Mammary epithelial cell (primary cell): ENCODE measurements at regions of chr3 and their contacts with region 1.

Region 1: GRCh38 chr3:46442576-46443562 is 21.8 kb downstream of the LTF start:
- DNase-seq: no peak
- H3K4me3 ChIP-seq: no peak overlapping the region
- H3K27ac ChIP-seq: no peak overlapping the region
- H3K4me1 ChIP-seq: no peaks in the 10 kb centered on the region
- H3K27me3 ChIP-seq: no peaks in the 10 kb centered on the region
- CTCF ChIP-seq: no peak

Region 2: GRCh38 chr3:45938864-45939263 is 504.0 kb before region 1 on chr3:
- CTCF ChIA-PET with region 1: no interaction called
- dilution Hi-C with region 1: no loop called
- in situ Hi-C with region 1: no loop called
- intact Hi-C with region 1: loop called (anchors 5 kb)
- DNase-seq: peak; percentile 74
- H3K4me3 ChIP-seq: no peak overlapping the region
- H3K27ac ChIP-seq: no peak overlapping the region
- H3K4me1 ChIP-seq: no peaks in the 10 kb centered on the region
- H3K27me3 ChIP-seq: no peaks in the 10 kb centered on the region
- CTCF ChIP-seq: peak; percentile 93 to 95

Region 3: GRCh38 chr3:46214751-46215352 is 228.0 kb before region 1 on chr3:
- CTCF ChIA-PET with region 1: no interaction called
- dilution Hi-C with region 1: no loop called
- in situ Hi-C with region 1: no loop called
- intact Hi-C with region 1: loop called (anchors 1 kb)
- DNase-seq: no peak
- H3K4me3 ChIP-seq: no peak overlapping the region
- H3K27ac ChIP-seq: no peak overlapping the region
- H3K4me1 ChIP-seq: peaks cover 2% of the 10 kb centered on the region
- H3K27me3 ChIP-seq: no peaks in the 10 kb centered on the region
- CTCF ChIP-seq: peak; percentile 37 to 57

Region 4: GRCh38 chr3:46276502-46277099 is 166.3 kb before region 1 on chr3:
- CTCF ChIA-PET with region 1: no interaction called
- dilution Hi-C with region 1: no loop called
- in situ Hi-C with region 1: no loop called
- intact Hi-C with region 1: loop called (anchors 1 kb)
- DNase-seq: peak; percentile 54
- H3K4me3 ChIP-seq: no peak overlapping the region
- H3K27ac ChIP-seq: no peak overlapping the region
- H3K4me1 ChIP-seq: no peaks in the 10 kb centered on the region
- H3K27me3 ChIP-seq: peaks cover 3% of the 10 kb centered on the region
- CTCF ChIP-seq: peak; percentile 66 to 78

Region 5: GRCh38 chr3:46349485-46350261 is 93.2 kb before region 1 on chr3:
- CTCF ChIA-PET with region 1: no interaction called
- dilution Hi-C with region 1: no loop called
- in situ Hi-C with region 1: no loop called
- intact Hi-C with region 1: no loop called
- DNase-seq: no peak
- H3K4me3 ChIP-seq: no peak overlapping the region
- H3K27ac ChIP-seq: no peak overlapping the region
- H3K4me1 ChIP-seq: no peaks in the 10 kb centered on the region
- H3K27me3 ChIP-seq: peaks cover 3% of the 10 kb centered on the region
- CTCF ChIP-seq: no peak

Region 6: GRCh38 chr3:46386206-46386605 is 56.7 kb before region 1 on chr3:
- CTCF ChIA-PET with region 1: interaction called, 3 read pairs
- dilution Hi-C with region 1: no loop called
- in situ Hi-C with region 1: no loop called
- intact Hi-C with region 1: loop called (anchors 2 kb)
- DNase-seq: peak; percentile 99
- H3K4me3 ChIP-seq: peak overlapping the region in 1 of 3 experiments; percentile 6
- H3K27ac ChIP-seq: peak overlapping the region; percentile 64
- H3K4me1 ChIP-seq: peaks cover 20% of the 10 kb centered on the region
- H3K27me3 ChIP-seq: no peaks in the 10 kb centered on the region
- CTCF ChIP-seq: no peak